PC-3 (cell line): ENCODE measurements at regions of chr10 and their contacts with region 1.

Region 1: GRCh38 chr10:83142074-83142563 is 997.2 kb upstream of the GHITM start:
- DNase-seq: no peak
- ATAC-seq: no peak
- H3K4me3 ChIP-seq: no peak overlapping the region
- H3K27ac ChIP-seq: no peak overlapping the region
- H3K4me1 ChIP-seq: no peaks in the 10 kb centered on the region
- H3K27me3 ChIP-seq: no peaks in the 10 kb centered on the region
- CTCF ChIP-seq: no peak

Region 2: DNA sequence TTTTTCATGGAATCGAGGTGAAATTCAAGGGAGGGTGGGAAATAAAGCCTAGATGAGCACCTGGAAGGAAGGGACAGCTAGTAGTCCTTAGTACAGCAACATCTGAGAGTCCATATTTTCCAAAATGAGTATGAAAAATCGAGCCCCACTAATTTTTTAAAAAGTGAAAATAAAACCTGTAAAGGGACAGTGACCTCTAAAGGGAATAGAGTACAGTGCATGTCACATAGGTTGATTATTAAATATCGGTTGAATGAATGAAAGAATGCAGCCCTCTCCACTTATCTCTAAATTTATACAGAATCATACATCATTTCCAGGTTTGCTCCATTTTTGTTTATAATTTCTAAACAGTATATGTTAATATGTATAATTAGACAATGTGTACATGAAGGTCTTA is 91.3 kb before region 1 on chr10:
- CTCF ChIA-PET with region 1: no interaction called
- POLR2A ChIA-PET with region 1: interaction called, 24 read pairs
- intact Hi-C with region 1: no loop called
- DNase-seq: no peak
- ATAC-seq: no peak
- H3K4me3 ChIP-seq: no peak overlapping the region
- H3K27ac ChIP-seq: no peak overlapping the region
- H3K4me1 ChIP-seq: no peaks in the 10 kb centered on the region
- H3K27me3 ChIP-seq: no peaks in the 10 kb centered on the region
- CTCF ChIP-seq: no peak

Region 3: GRCh38 chr10:83164141-83164540 is 22.0 kb after region 1 on chr10:
- CTCF ChIA-PET with region 1: no interaction called
- POLR2A ChIA-PET with region 1: no interaction called
- intact Hi-C with region 1: no loop called
- DNase-seq: no peak
- ATAC-seq: no peak
- H3K4me3 ChIP-seq: no peak overlapping the region
- H3K27ac ChIP-seq: no peak overlapping the region
- H3K4me1 ChIP-seq: no peaks in the 10 kb centered on the region
- H3K27me3 ChIP-seq: no peaks in the 10 kb centered on the region
- CTCF ChIP-seq: no peak